ENCODE measurements at regions of chr6 and their contacts with region 1.

Region 1: DNA sequence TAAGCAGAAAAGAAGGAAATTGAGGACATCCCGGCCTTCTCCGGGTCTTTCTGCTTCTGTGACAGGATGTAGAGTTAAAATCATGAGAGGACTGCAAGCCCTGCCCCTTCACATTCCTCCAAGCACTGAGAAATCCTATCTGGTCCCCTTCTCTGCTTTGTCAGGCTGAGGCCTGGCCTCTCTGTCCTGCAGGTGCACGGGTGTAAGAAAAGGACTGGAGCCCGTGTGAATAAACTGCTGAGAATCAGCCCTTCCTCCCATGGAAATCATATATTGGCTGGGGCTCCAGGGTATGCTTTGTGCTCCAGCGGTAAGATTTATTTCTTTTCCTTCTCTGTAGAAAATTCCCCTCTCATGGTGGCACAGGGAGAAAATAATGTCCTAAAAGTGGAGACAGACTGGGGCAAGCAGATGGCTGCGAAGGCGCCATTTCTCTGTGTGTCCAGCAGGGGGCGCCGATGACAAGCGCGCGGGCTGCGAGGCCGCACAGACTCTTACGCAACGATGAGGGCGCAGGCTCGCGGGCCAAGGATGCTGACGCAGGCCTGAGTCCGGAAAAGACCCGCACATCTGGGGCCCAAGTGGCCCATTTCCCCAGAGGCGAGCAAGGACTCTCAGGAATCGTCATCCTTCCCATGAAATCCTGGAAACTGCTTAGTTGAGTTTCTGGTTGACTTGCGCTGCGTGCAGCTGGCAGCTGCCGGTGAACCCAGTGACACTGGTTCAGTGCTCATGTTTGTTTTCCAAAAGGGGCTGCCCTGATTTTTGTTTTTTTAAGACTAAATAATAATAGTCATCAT is 258.6 kb downstream of the ADGB start:
- DNase-seq: peak; percentile 78
- H3K4me3 Mint-ChIP-seq: no peak overlapping the region
- H3K27ac Mint-ChIP-seq: no peak overlapping the region
- H3K4me1 Mint-ChIP-seq: no peaks in the 10 kb centered on the region
- H3K27me3 Mint-ChIP-seq: no peaks in the 10 kb centered on the region
- CTCF ChIP-seq: peak; percentile 96

Region 2: DNA sequence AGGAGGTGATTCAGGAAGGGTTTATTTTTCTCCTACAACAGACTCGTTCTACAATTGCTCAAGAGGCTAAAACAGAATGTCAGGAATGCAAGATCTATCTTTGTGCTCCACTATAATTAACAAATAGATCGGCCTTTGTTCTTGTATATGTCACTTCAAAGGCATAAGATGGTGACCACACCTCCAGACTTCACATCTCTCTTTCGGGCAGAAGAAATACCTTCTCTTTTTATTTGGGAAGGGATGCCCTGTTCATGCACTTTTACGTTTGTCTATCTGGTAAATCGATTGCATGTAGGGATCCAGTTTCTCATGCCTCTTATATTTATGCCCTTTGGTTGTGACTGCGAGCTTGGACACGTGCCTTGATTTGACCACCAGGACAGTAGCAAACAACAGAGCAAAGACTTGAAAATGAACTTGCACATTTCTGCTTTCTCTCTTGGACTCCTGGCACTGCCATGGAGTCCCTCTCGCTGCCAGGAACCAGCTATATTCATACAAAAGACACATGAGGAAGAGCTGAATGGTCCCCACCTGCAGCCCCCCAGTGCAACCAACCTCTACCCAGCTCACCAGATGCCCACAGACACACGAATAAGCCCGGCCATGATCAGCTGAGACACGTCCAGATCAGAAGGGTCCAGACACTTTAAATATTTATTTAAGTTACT is 127.0 kb after region 1 on chr6:
- CTCF ChIA-PET with region 1: no interaction called
- POLR2A ChIA-PET with region 1: no interaction called
- intact Hi-C with region 1: no loop called
- DNase-seq: no peak
- H3K4me3 Mint-ChIP-seq: no peak overlapping the region
- H3K27ac Mint-ChIP-seq: no peak overlapping the region
- H3K4me1 Mint-ChIP-seq: peaks cover 8% of the 10 kb centered on the region
- H3K27me3 Mint-ChIP-seq: no peaks in the 10 kb centered on the region
- CTCF ChIP-seq: no peak

Region 3: GRCh38 chr6:147126618-147127022 is 269.2 kb after region 1 on chr6:
- CTCF ChIA-PET with region 1: no interaction called
- POLR2A ChIA-PET with region 1: no interaction called
- intact Hi-C with region 1: no loop called
- DNase-seq: no peak
- H3K4me3 Mint-ChIP-seq: no peak overlapping the region
- H3K27ac Mint-ChIP-seq: no peak overlapping the region
- H3K4me1 Mint-ChIP-seq: no peaks in the 10 kb centered on the region
- H3K27me3 Mint-ChIP-seq: no peaks in the 10 kb centered on the region
- CTCF ChIP-seq: no peak

Region 4: GRCh38 chr6:147154454-147154853 is 297.1 kb after region 1 on chr6:
- CTCF ChIA-PET with region 1: no interaction called
- POLR2A ChIA-PET with region 1: no interaction called
- intact Hi-C with region 1: no loop called
- DNase-seq: peak; percentile 81
- H3K4me3 Mint-ChIP-seq: peak overlapping the region; percentile 43
- H3K27ac Mint-ChIP-seq: peak overlapping the region; percentile 90
- H3K4me1 Mint-ChIP-seq: peaks cover 52% of the 10 kb centered on the region
- H3K27me3 Mint-ChIP-seq: no peaks in the 10 kb centered on the region
- CTCF ChIP-seq: no peak

Region 5: DNA sequence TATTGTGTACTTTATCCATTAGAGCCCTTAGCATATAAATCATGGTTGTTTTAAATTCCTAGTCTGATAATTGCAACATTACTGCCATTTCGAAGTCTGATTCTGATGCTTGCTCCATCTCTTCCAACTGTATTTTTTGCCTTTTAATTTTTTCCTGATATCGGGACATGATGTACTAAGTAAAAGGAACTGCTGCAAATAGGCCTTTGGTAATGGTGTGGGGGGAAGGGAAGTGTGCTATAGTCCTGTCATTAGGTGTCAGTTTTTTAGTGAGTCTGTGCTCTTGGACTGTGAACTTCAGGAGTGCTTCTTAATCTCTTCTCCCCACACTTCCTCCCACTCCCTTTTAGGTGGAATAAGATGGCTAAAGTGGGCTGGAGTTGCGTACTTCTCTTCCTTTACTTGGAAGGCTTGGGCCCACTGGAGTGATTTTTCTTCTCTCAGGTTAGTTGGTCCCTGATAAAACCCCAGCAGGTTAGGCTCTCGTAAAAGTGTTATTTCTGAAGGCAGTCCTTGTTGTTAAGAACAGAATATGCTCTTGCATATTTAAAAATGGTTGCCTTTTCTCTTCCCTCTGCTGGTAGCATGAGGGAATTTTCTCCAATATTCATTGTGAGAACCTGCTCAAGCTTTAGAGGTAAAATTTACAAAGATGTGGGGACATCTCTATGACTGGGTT is 364.9 kb after region 1 on chr6:
- CTCF ChIA-PET with region 1: no interaction called
- POLR2A ChIA-PET with region 1: no interaction called
- intact Hi-C with region 1: loop called (anchors 5 kb)
- DNase-seq: peak; percentile 24
- H3K4me3 Mint-ChIP-seq: no peak overlapping the region
- H3K27ac Mint-ChIP-seq: peak overlapping the region; percentile 37
- H3K4me1 Mint-ChIP-seq: peaks cover 39% of the 10 kb centered on the region
- H3K27me3 Mint-ChIP-seq: no peaks in the 10 kb centered on the region
- CTCF ChIP-seq: peak; percentile 27